CD4-positive, alpha-beta T cell (primary cell): ENCODE measurements at regions of chr15 and their contacts with region 1.

Region 1: GRCh38 chr15:72685925-72686794 is at the starts of genes BBS4 and HIGD2B:
- DNase-seq: peak; percentile 71 to 93 (median 82)
- ATAC-seq: peak; percentile 92
- H3K4me3 ChIP-seq: peak within 1 kb of the TSS; percentile 75
- H3K4me3 Mint-ChIP-seq: peak within 1 kb of the TSS; percentile 94
- H3K27ac ChIP-seq: peak within 1 kb of the TSS; percentile 77 to 81
- H3K27ac Mint-ChIP-seq: peak within 1 kb of the TSS; percentile 96
- H3K4me1 ChIP-seq: peaks cover 17% of the 10 kb centered on the region
- H3K4me1 Mint-ChIP-seq: peaks cover 18% of the 10 kb centered on the region
- H3K27me3 ChIP-seq: no peaks in the 10 kb centered on the region
- H3K27me3 Mint-ChIP-seq: no peaks in the 10 kb centered on the region
- CTCF ChIP-seq: no peak
- total RNA-seq, gene BBS4: 8.6 to 12.8 TPM
- total RNA-seq, gene HIGD2B: 0.28 TPM in 1 of 2 experiments, not detected in the other

Region 2: GRCh38 chr15:72671535-72671934 is 14.6 kb before region 1 on chr15:
- CTCF ChIA-PET with region 1: interaction called, 11 read pairs
- POLR2A ChIA-PET with region 1: interaction called, 3 read pairs
- intact Hi-C with region 1: no loop called
- DNase-seq: no peak
- ATAC-seq: no peak
- H3K4me3 ChIP-seq: no peak overlapping the region
- H3K4me3 Mint-ChIP-seq: no peak overlapping the region
- H3K27ac ChIP-seq: no peak overlapping the region
- H3K27ac Mint-ChIP-seq: no peak overlapping the region
- H3K4me1 ChIP-seq: peaks cover 7% of the 10 kb centered on the region
- H3K4me1 Mint-ChIP-seq: peaks cover 6% of the 10 kb centered on the region
- H3K27me3 ChIP-seq: peaks cover 0 to 10% of the 10 kb centered on the region in 2 experiments
- H3K27me3 Mint-ChIP-seq: peaks cover 15% of the 10 kb centered on the region
- CTCF ChIP-seq: no peak

Region 3: DNA sequence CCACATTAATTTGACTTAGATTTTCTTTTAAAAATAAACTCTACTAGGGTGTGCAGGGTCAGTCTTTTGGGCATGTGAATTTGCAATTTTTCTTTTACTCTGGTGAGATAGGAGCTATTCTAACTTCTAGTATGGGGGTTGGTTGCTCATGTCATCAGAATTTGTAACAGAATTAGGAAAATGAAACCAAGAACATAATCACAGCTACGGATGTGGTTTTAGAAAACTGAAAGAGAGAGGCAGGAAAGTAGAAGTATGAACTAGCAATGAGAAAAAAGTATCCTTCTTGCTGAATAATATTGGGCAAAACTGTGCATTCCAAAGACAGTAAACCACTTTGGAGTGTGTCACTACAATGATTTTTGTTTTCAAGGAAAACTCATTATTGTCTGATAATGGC is 54.1 kb after region 1 on chr15:
- CTCF ChIA-PET with region 1: no interaction called
- POLR2A ChIA-PET with region 1: interaction called, 11 read pairs
- intact Hi-C with region 1: no loop called
- DNase-seq: peak in 3 of 14 experiments; percentile 13 to 76 (median 35)
- ATAC-seq: peak; percentile 77
- H3K4me3 ChIP-seq: no peak overlapping the region
- H3K4me3 Mint-ChIP-seq: peak overlapping the region; percentile 50
- H3K27ac ChIP-seq: peak overlapping the region in 1 of 2 donors; percentile 50
- H3K27ac Mint-ChIP-seq: peak overlapping the region; percentile 71
- H3K4me1 ChIP-seq: peaks cover 8% of the 10 kb centered on the region
- H3K4me1 Mint-ChIP-seq: peaks cover 40% of the 10 kb centered on the region
- H3K27me3 ChIP-seq: no peaks in the 10 kb centered on the region
- H3K27me3 Mint-ChIP-seq: no peaks in the 10 kb centered on the region
- CTCF ChIP-seq: no peak